ENCODE measurements at regions of chr9 and their contacts with region 1.

Region 1: DNA sequence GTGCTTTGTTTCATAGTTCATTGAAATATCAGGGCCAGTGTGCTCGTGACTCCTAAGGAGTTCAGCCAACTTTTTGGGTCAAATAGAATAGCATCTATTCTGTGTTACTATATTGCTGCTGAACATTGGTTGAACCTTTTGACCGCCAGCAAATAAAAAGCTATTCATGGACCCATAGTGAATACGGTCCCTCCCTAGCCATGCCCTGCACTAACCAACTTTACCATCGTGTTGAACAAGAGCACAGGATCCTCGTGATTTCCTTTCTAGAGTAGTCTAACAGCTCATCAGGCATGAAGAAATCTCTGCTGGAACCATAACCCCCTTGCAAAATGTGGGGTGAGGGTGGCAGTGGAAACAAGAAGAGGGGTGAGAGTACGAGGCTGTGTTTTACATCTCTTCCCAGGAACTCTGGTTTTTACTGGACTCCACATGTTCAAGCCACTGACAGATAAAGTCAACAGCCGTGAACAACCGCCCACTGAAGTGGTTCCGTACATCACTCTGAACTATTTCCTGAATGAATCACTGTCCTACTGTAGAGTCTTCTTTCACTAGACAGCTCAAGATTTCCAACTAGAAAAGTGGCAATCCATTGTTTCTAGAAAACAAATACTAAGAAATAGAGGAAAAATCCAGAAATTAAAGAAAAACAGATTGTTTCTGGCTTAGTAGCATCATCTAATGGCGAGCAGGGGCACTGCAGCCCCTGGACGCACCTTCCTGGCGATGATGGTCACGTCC is 70.1 kb upstream of the SPATA31E1 start:
- DNase-seq: peak in 1 of 5 donors; percentile 51
- H3K4me3 ChIP-seq: no peak overlapping the region
- H3K27ac ChIP-seq: no peak overlapping the region
- H3K4me1 ChIP-seq: no peaks in the 10 kb centered on the region
- H3K27me3 ChIP-seq: no peaks in the 10 kb centered on the region
- CTCF ChIP-seq: peak; percentile 27 to 83 (median 71)
- EP300 ChIP-seq: no peak
- POLR2A ChIP-seq: no peak

Region 2: DNA sequence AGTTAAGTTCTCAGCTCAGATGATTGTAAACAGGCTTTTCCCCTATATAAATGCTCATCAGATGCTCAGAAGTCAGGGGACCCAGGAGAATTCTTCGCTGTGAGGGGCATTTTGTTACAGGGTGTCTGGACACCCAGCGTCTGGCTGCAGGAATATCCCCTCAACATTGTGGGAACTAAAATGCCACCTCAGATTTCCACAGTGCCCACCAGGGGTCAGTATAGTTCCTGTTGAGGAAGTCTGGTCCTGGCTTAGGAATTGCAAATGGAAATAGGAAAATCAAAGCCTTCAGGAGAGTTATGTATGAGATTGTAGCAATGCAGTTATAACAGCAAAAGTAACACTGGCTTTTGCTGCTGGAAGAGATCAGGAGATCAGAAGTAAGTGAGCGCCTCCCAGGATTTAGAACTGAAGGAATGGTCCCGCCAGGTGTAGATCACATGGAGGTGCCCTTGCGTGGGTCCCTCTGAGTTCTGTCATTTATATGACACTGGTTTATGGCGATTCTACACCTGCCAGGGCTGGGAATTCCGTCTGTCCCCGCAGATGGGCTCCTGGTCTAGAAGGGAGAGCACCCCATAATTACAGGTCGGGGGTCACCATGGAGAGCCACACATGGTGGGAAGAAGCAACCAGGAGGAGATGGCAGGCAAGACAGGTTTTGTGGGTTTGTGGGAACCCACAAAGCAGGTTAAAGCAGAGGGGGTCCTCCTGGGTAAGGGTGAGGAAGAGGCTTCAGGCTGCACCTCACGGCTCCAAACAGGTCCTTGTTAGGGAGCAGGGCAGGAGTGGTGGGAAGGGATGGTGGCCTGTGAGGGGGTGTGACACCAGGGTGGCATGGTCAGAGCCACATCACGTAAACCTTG is 133.7 kb before region 1 on chr9:
- intact Hi-C with region 1: loop called (anchors 2 to 10 kb)
- DNase-seq: peak in 3 of 5 donors; percentile 54 to 75 (median 69)
- H3K4me3 ChIP-seq: no peak overlapping the region
- H3K27ac ChIP-seq: no peak overlapping the region
- H3K4me1 ChIP-seq: peaks cover 1% of the 10 kb centered on the region
- H3K27me3 ChIP-seq: no peaks in the 10 kb centered on the region
- CTCF ChIP-seq: peak; percentile 46 to 65 (median 64)
- EP300 ChIP-seq: no peak
- POLR2A ChIP-seq: no peak

Region 3: DNA sequence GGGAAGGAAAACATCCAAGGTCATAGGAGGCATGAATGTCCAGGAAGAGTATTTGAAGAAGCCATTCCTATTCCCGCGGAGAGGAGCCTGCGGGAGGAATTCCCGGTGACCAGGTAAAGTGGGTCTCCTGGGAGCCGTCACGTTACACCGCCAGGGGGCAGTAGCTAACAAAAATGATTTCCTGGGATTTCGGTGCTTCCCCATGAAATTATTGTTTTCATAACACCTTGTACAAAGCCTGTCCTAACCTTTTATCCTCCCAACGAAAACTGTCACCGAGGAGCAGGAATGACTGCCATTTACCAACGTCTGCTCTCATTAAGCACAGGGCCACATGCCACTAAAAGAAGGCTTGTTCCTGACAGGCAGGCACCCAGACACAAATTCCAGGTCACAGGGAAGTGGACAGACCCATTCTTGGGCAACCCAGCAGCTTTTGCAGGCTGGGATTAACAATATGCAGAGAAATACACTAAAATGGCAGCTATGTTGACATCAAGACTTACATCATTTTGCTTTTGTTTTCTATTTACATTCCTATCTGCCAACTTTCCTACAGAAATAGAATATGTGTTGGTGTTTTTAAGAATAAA is 127.8 kb before region 1 on chr9:
- intact Hi-C with region 1: loop called (anchors 2 to 10 kb)
- DNase-seq: peak; percentile 69 to 79 (median 72)
- H3K4me3 ChIP-seq: no peak overlapping the region
- H3K27ac ChIP-seq: peak overlapping the region in 1 of 2 donors; percentile 24
- H3K4me1 ChIP-seq: peaks cover 3% of the 10 kb centered on the region
- H3K27me3 ChIP-seq: no peaks in the 10 kb centered on the region
- CTCF ChIP-seq: peak; percentile 45 to 61 (median 55)
- EP300 ChIP-seq: no peak
- POLR2A ChIP-seq: no peak

Region 4: DNA sequence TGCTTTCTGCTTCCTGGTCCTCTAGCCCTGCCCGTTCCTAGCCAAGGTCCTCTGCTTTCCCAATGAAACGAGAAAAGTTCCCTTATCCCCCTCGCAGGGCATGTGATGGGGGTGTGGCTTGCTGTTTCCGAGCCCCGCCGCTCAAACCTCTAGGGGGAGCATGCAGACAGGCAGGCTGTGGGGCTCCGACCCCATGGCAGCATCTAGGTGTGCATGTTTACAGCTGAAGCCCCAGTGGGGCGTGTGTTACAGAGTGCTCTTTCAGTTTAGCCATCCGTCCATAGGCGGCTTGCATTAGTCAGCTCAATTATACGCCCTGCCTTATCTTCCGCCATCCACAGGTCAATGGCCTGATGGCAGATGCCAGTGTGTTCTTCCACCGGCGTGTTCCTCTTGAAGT is 21.8 kb after region 1 on chr9:
- intact Hi-C with region 1: no loop called
- DNase-seq: no peak
- H3K4me3 ChIP-seq: no peak overlapping the region
- H3K27ac ChIP-seq: no peak overlapping the region
- H3K4me1 ChIP-seq: no peaks in the 10 kb centered on the region
- H3K27me3 ChIP-seq: no peaks in the 10 kb centered on the region
- CTCF ChIP-seq: no peak
- EP300 ChIP-seq: no peak
- POLR2A ChIP-seq: no peak

Measured in ovary (tissue), 10 donors.